ENCODE measurements at regions of chr3 and their contacts with region 1.

Region 1: DNA sequence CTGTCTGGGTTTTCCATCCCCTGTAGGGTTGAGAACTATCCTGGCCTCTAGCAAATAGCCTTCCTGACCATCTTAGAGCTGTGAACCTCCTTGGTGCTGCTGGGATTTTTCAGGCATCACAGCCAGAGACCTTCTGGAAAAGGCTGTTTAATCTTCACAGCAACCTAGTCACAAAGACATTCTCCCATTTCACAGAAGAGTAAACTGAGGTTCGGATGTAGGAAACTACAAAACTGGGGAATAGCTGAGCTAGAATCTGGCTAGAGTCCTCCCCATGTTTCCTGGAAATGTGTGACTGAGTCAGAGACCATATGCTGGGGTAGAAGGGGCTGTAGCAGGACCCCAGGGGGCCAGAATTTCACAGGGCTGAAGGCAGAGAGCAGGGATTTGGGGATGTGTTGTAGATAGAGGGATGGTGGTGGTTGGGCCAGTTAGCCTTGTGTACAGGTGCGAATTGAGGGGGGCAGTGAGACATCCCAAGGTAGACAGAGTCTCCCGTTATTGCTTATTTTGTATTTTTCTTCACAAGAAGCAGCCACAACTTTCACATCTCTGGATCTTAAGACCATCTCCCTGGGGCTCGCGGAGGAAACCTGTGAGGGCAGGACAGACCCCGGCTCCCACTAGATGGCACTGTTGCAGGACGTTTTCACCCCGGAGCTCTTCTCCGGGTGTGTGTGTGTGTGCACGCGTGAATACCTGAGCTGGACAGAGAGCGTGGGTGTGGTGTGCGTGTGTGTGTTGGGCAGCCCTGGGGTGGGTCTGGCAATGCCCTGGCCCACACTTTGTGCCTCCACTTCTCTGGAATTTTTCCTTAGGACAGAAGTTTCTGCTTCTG is 66.9 kb upstream of the PRR23C start:
- DNase-seq: peak; percentile 7 to 63 (median 49)
- ATAC-seq: no peak
- H3K4me3 ChIP-seq: no peak overlapping the region
- H3K4me3 Mint-ChIP-seq: no peak overlapping the region
- H3K27ac ChIP-seq: no peak overlapping the region
- H3K27ac Mint-ChIP-seq: no peak overlapping the region
- H3K4me1 ChIP-seq: no peaks in the 10 kb centered on the region
- H3K4me1 Mint-ChIP-seq: peaks cover 9% of the 10 kb centered on the region
- H3K27me3 ChIP-seq: no peaks in the 10 kb centered on the region
- H3K27me3 Mint-ChIP-seq: peaks cover 10% of the 10 kb centered on the region
- CTCF ChIP-seq: peak; percentile 58

Region 2: GRCh38 chr3:139095803-139096466 is 15.7 kb before region 1 on chr3:
- CTCF ChIA-PET with region 1: interaction called, 12 read pairs
- POLR2A ChIA-PET with region 1: no interaction called
- intact Hi-C with region 1: no loop called
- DNase-seq: no peak
- ATAC-seq: no peak
- H3K4me3 ChIP-seq: no peak overlapping the region
- H3K4me3 Mint-ChIP-seq: no peak overlapping the region
- H3K27ac ChIP-seq: no peak overlapping the region
- H3K27ac Mint-ChIP-seq: no peak overlapping the region
- H3K4me1 ChIP-seq: no peaks in the 10 kb centered on the region
- H3K4me1 Mint-ChIP-seq: no peaks in the 10 kb centered on the region
- H3K27me3 ChIP-seq: no peaks in the 10 kb centered on the region
- H3K27me3 Mint-ChIP-seq: peaks cover 17% of the 10 kb centered on the region
- CTCF ChIP-seq: no peak

Region 3: GRCh38 chr3:139101396-139101795 is 10.2 kb before region 1 on chr3:
- CTCF ChIA-PET with region 1: interaction called, 12 read pairs
- POLR2A ChIA-PET with region 1: no interaction called
- intact Hi-C with region 1: no loop called
- DNase-seq: no peak
- ATAC-seq: no peak
- H3K4me3 ChIP-seq: no peak overlapping the region
- H3K4me3 Mint-ChIP-seq: no peak overlapping the region
- H3K27ac ChIP-seq: no peak overlapping the region
- H3K27ac Mint-ChIP-seq: no peak overlapping the region
- H3K4me1 ChIP-seq: no peaks in the 10 kb centered on the region
- H3K4me1 Mint-ChIP-seq: no peaks in the 10 kb centered on the region
- H3K27me3 ChIP-seq: no peaks in the 10 kb centered on the region
- H3K27me3 Mint-ChIP-seq: peaks cover 8% of the 10 kb centered on the region
- CTCF ChIP-seq: no peak

Measured in CD8-positive, alpha-beta T cell (primary cell).